IMR-90 (cell line): ENCODE measurements at regions of chr2 and their contacts with region 1.

Region 1: GRCh38 chr2:234135720-234136221 is 85.3 kb downstream of the SPP2 start:
- DNase-seq: peak; percentile 76
- ATAC-seq: peak; percentile 98
- H3K4me3 ChIP-seq: no peak overlapping the region
- H3K27ac ChIP-seq: no peak overlapping the region
- H3K4me1 ChIP-seq: no peaks in the 10 kb centered on the region
- H3K27me3 ChIP-seq: peaks cover 11% of the 10 kb centered on the region
- CTCF ChIP-seq: peak; percentile 89
- POLR2A ChIP-seq: peak; percentile 40; the same call in 1 of the 2 replicates
- RAD21 ChIP-seq: peak; percentile 96

Region 2: GRCh38 chr2:234257856-234258561 is 122.2 kb after region 1 on chr2:
- CTCF ChIA-PET with region 1: interaction called, 3 read pairs
- POLR2A ChIA-PET with region 1: no interaction called
- dilution Hi-C with region 1: no loop called
- in situ Hi-C with region 1: no loop called
- intact Hi-C with region 1: loop called (anchors 1 kb)
- DNase-seq: peak; percentile 99
- ATAC-seq: peak; percentile 97
- H3K4me3 ChIP-seq: no peak overlapping the region
- H3K27ac ChIP-seq: peak overlapping the region; percentile 6
- H3K4me1 ChIP-seq: peaks cover 10% of the 10 kb centered on the region
- H3K27me3 ChIP-seq: no peaks in the 10 kb centered on the region
- CTCF ChIP-seq: peak; percentile 81
- POLR2A ChIP-seq: no peak
- RAD21 ChIP-seq: peak; percentile 77

Region 3: DNA sequence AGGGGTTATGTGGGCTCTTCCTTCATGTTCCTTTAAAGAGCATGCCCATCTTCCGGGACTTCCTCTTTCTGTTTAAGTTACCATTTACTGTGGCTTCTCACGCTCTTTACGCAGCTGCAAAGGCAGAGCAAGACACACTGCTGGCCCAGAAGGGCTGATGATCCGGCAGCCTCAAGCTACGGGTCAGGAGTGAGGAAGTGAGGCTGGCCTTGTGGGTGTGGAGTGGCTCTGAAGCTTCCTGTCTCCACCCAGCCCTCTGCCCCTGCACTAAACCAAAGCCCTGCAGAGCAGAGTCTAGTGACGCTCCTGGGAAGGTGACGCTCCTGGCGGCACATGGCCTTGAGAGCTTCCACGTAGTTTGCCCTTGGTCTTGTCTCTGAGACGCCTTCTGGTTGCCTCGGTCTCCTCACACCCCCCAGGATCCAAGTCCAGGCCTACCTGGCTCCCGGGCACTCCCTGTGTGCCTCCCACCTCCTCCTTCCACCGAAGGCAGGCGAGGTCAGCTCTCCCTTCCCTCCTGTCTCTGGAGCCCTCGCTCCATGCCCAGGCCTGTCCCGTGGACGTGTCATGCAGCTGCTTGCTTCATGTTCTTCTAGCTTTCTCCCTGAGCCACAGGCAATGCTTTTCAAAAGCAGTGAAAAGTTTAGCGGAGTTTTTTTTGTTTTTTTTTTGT is 310.8 kb after region 1 on chr2:
- CTCF ChIA-PET with region 1: interaction called, 3 read pairs
- POLR2A ChIA-PET with region 1: no interaction called
- dilution Hi-C with region 1: no loop called
- in situ Hi-C with region 1: no loop called
- intact Hi-C with region 1: loop called (anchors 2 kb)
- DNase-seq: no peak
- ATAC-seq: no peak
- H3K4me3 ChIP-seq: no peak overlapping the region
- H3K27ac ChIP-seq: no peak overlapping the region
- H3K4me1 ChIP-seq: peaks cover 25% of the 10 kb centered on the region
- H3K27me3 ChIP-seq: no peaks in the 10 kb centered on the region
- CTCF ChIP-seq: no peak
- POLR2A ChIP-seq: no peak
- RAD21 ChIP-seq: no peak

Region 4: DNA sequence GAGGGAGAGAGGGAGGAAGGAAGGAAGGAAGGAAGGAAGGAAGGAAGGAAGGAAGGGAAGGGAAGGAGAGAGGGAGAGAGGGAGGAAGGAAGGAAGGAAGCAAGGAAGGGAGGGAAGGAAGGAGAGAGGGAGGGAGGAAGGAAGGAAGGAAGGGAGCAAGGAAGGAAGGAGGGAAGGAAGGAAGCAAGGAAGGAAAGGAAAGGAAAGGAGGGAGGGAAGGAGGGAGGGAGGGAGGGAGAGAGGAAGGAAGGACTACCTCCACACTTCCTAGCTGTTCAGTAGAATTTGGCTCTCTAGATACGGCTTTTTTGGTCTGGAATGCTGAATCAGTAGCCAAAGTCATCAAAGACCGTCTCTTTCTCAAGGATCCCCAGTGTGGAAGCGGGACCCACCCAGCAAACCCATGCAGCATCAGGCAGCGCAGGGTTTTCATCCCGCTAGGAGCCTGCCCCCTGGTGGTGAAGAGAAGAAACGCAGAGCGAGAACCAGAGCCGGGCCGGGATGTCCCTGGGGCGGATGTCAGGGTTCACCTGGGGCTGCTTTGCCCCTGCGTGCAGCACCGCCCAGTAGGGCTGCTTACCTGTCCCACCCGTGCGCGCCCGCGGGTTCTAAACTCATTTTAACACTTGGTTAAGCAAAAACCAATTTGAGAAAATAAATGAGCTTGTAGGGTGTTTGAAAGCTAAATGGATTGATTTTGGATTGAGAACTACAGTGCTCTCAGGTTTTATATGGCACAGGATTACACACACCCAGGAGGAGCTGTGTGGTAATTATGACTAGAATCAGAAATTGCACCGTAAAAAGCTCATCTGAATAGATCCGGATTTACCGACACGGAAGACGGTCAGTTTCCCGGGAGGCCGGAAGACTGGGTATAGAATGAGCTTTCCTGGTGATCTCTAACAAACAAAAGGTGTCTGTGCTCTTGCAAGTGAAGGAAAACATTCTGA is 409.2 kb after region 1 on chr2:
- CTCF ChIA-PET with region 1: interaction called, 4 read pairs
- POLR2A ChIA-PET with region 1: no interaction called
- dilution Hi-C with region 1: no loop called
- in situ Hi-C with region 1: loop called (anchors 5 kb)
- intact Hi-C with region 1: loop called (anchors 1 kb)
- DNase-seq: peak; percentile 59
- ATAC-seq: peak; percentile 95
- H3K4me3 ChIP-seq: no peak overlapping the region
- H3K27ac ChIP-seq: no peak overlapping the region
- H3K4me1 ChIP-seq: no peaks in the 10 kb centered on the region
- H3K27me3 ChIP-seq: no peaks in the 10 kb centered on the region; the same call in 1 of the 2 replicates
- CTCF ChIP-seq: peak; percentile 77
- POLR2A ChIP-seq: no peak
- RAD21 ChIP-seq: peak; percentile 88